ENCODE measurements at regions of chr3 and their contacts with region 1.

Region 1: GRCh38 chr3:113745273-113746068 is 578 bp downstream of the NAA50 start:
- DNase-seq: peak; percentile 51 to 95 (median 78)
- ATAC-seq: peak; percentile 71
- H3K4me3 ChIP-seq: peak overlapping the region; percentile 83 to 86
- H3K4me3 Mint-ChIP-seq: peak overlapping the region; percentile 95
- H3K27ac ChIP-seq: peak overlapping the region; percentile 97 to 99
- H3K27ac Mint-ChIP-seq: peak overlapping the region; percentile 100
- H3K4me1 ChIP-seq: peaks cover 46% of the 10 kb centered on the region
- H3K4me1 Mint-ChIP-seq: peaks cover 72% of the 10 kb centered on the region
- H3K27me3 ChIP-seq: no peaks in the 10 kb centered on the region
- H3K27me3 Mint-ChIP-seq: no peaks in the 10 kb centered on the region
- CTCF ChIP-seq: peak; percentile 66

Region 2: DNA sequence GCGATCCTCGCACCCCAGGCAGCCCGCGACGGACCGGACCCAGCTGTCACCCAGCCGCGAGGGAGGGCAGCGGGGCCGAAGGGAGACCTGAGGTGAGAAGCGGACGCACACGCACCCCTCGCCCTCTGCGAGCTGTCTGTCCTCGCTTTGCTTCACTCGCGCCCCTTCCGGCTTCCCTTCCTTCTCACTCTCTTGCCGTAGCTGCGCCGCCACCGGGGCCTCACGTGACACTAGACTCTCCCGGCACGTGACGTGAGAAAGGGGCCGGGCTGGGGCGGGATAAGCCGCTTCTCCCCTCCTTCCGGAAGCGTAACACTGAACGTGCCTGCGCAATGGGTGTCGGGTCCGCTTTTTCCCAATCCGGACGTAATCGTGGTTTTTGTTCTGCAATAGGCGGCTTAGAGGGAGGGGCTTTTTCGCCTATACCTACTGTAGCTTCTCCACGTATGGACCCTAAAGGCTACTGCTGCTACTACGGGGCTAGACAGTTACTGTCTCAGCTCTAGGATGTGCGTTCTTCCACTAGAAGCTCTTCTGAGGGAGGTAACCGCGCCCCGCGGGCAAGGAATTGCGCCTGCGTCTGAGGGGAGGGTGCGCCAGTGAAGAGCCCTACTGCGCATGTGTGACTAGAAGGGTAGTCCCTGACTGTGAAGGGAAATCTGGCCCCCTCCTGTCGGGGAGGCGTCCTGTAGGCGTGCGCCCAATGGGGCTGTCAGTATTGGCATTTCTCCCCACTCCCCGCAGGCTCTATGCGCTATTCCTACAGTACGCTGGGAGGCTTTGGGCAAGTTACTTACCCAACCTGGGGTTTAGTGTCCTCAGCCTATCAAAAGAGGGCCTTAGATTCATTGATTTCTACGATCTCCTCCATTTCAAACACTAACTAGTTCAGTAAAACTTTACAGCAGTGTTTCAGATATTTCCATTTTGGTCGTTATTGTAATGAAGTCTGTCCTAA is 1183.5 kb before region 1 on chr3 and contains the starts of genes ATG3 and SLC35A5:
- CTCF ChIA-PET with region 1: interaction called, 3 read pairs
- POLR2A ChIA-PET with region 1: no interaction called
- intact Hi-C with region 1: loop called in 1 of 2 experiments (anchors 5 kb)
- DNase-seq: peak; percentile 98 to 100 (median 99)
- ATAC-seq: peak; percentile 77
- H3K4me3 ChIP-seq: peak within 1 kb of the TSS; percentile 75 to 82
- H3K4me3 Mint-ChIP-seq: peak within 1 kb of the TSS; percentile 97
- H3K27ac ChIP-seq: peak within 1 kb of the TSS; percentile 83 to 93
- H3K27ac Mint-ChIP-seq: peak within 1 kb of the TSS; percentile 99
- H3K4me1 ChIP-seq: peaks cover 22% of the 10 kb centered on the region
- H3K4me1 Mint-ChIP-seq: peaks cover 47% of the 10 kb centered on the region
- H3K27me3 ChIP-seq: no peaks in the 10 kb centered on the region
- H3K27me3 Mint-ChIP-seq: no peaks in the 10 kb centered on the region
- CTCF ChIP-seq: no peak
- total RNA-seq, gene ATG3: 50.0 to 54.4 TPM
- total RNA-seq, gene SLC35A5: 4.4 to 6.1 TPM

Region 3: GRCh38 chr3:113287803-113288648 is 457.4 kb before region 1 on chr3:
- CTCF ChIA-PET with region 1: interaction called, 4 read pairs
- POLR2A ChIA-PET with region 1: no interaction called
- intact Hi-C with region 1: loop called in 1 of 2 experiments (anchors 5 kb)
- DNase-seq: peak in 7 of 9 experiments; percentile 14 to 68 (median 56)
- ATAC-seq: peak; percentile 59
- H3K4me3 ChIP-seq: no peak overlapping the region
- H3K4me3 Mint-ChIP-seq: no peak overlapping the region
- H3K27ac ChIP-seq: no peak overlapping the region
- H3K27ac Mint-ChIP-seq: no peak overlapping the region
- H3K4me1 ChIP-seq: no peaks in the 10 kb centered on the region
- H3K4me1 Mint-ChIP-seq: no peaks in the 10 kb centered on the region
- H3K27me3 ChIP-seq: no peaks in the 10 kb centered on the region
- H3K27me3 Mint-ChIP-seq: no peaks in the 10 kb centered on the region
- CTCF ChIP-seq: peak; percentile 99

Region 4: GRCh38 chr3:113531826-113532697 is 213.4 kb before region 1 on chr3 and contains the start of gene SIDT1:
- CTCF ChIA-PET with region 1: no interaction called
- POLR2A ChIA-PET with region 1: interaction called, 6 read pairs
- intact Hi-C with region 1: loop called (anchors 1 to 5 kb)
- DNase-seq: peak; percentile 50 to 90 (median 73)
- ATAC-seq: peak; percentile 77
- H3K4me3 ChIP-seq: peak within 1 kb of the TSS; percentile 83 to 93
- H3K4me3 Mint-ChIP-seq: peak within 1 kb of the TSS; percentile 96
- H3K27ac ChIP-seq: peak within 1 kb of the TSS; percentile 87 to 93
- H3K27ac Mint-ChIP-seq: peak within 1 kb of the TSS; percentile 97
- H3K4me1 ChIP-seq: peaks cover 43% of the 10 kb centered on the region
- H3K4me1 Mint-ChIP-seq: peaks cover 52% of the 10 kb centered on the region
- H3K27me3 ChIP-seq: no peaks in the 10 kb centered on the region
- H3K27me3 Mint-ChIP-seq: no peaks in the 10 kb centered on the region
- CTCF ChIP-seq: no peak
- total RNA-seq, gene SIDT1: 32.1 to 38.3 TPM

Region 5: GRCh38 chr3:113783463-113783862 is 38.0 kb after region 1 on chr3:
- CTCF ChIA-PET with region 1: interaction called, 3 read pairs
- POLR2A ChIA-PET with region 1: no interaction called
- intact Hi-C with region 1: loop called in 1 of 2 experiments (anchors 5 kb)
- DNase-seq: peak in 1 of 9 experiments; percentile 17
- ATAC-seq: no peak
- H3K4me3 ChIP-seq: no peak overlapping the region
- H3K4me3 Mint-ChIP-seq: no peak overlapping the region
- H3K27ac ChIP-seq: no peak overlapping the region
- H3K27ac Mint-ChIP-seq: no peak overlapping the region
- H3K4me1 ChIP-seq: no peaks in the 10 kb centered on the region
- H3K4me1 Mint-ChIP-seq: peaks cover 3% of the 10 kb centered on the region
- H3K27me3 ChIP-seq: no peaks in the 10 kb centered on the region
- H3K27me3 Mint-ChIP-seq: no peaks in the 10 kb centered on the region
- CTCF ChIP-seq: no peak

Region 6: GRCh38 chr3:114152519-114153151 is 407.2 kb after region 1 on chr3:
- CTCF ChIA-PET with region 1: no interaction called
- POLR2A ChIA-PET with region 1: no interaction called
- intact Hi-C with region 1: loop called in 1 of 2 experiments (anchors 5 kb)
- DNase-seq: peak; percentile 76 to 91 (median 87)
- ATAC-seq: peak; percentile 100
- H3K4me3 ChIP-seq: peak overlapping the region; percentile 46 to 50
- H3K4me3 Mint-ChIP-seq: peak overlapping the region; percentile 73
- H3K27ac ChIP-seq: peak overlapping the region in 1 of 2 experiments; percentile 47
- H3K27ac Mint-ChIP-seq: no peak overlapping the region
- H3K4me1 ChIP-seq: peaks cover 8% of the 10 kb centered on the region
- H3K4me1 Mint-ChIP-seq: peaks cover 10% of the 10 kb centered on the region
- H3K27me3 ChIP-seq: no peaks in the 10 kb centered on the region
- H3K27me3 Mint-ChIP-seq: no peaks in the 10 kb centered on the region
- CTCF ChIP-seq: peak; percentile 99

Region 7: DNA sequence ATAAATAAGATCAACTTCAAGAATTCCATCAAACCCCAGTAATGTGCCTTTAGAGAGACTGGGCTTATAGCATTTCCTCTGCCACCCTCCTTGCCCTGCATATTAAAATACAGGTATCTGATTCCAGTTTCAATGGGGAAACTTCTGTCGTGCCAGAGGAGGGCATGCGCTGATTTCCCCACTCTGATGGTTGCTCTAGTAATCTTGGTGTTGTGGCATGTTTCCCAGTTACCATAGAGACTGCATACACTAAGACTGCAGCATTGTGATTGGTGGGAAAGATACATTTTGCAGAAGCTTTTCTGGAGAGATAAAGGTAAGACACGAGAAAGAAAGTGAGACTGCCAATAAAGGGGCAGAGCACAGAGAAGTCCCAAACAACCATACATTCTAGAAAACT is 773.9 kb after region 1 on chr3:
- CTCF ChIA-PET with region 1: no interaction called
- POLR2A ChIA-PET with region 1: no interaction called
- intact Hi-C with region 1: no loop called
- DNase-seq: peak in 2 of 9 experiments; percentile 22 to 41
- ATAC-seq: no peak
- H3K4me3 ChIP-seq: no peak overlapping the region
- H3K4me3 Mint-ChIP-seq: no peak overlapping the region
- H3K27ac ChIP-seq: no peak overlapping the region
- H3K27ac Mint-ChIP-seq: no peak overlapping the region
- H3K4me1 ChIP-seq: no peaks in the 10 kb centered on the region
- H3K4me1 Mint-ChIP-seq: no peaks in the 10 kb centered on the region
- H3K27me3 ChIP-seq: no peaks in the 10 kb centered on the region
- H3K27me3 Mint-ChIP-seq: no peaks in the 10 kb centered on the region
- CTCF ChIP-seq: no peak

Region 8: DNA sequence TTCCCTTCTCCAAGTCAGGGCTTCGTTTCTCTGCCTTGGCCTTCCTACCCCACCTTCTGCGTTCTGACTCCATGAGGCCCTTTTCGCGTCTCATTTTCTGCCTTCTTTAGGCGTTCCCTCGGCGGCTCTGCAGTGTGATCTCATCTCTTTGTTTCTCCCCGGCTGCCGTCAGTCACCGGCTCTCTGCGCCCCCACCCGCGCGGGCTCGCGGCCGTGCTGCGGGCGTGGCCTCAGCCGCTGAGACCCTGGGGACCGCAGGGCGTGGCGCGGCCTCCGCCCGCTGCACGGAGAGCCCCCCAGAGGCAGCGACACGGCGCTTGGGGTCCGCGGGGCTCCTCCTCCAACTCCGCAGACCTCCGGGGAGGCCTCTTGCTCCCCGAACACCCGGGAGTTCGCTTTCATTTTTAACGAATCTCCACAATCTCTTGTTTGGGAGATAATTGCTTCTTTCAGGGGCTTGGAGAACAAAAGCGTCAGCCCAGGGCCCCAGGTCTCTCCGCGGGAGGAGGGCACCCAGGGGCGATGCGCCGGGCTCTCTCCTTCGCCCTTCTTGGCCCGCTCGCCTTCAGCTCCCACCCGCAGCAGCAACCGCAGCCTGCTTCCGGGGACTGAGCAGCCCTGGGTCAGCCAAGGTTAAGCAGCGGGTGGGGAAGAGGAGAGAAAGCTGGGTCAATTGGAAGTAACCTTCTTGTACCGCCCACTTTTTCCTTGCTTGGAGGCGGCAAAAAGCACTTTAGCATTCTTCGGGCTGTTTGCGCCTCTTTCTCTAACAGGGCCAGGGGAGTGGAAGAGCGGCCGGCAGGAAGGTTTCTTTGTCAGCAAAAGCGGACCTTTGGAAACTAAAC is 1913.1 kb after region 1 on chr3:
- CTCF ChIA-PET with region 1: no interaction called
- POLR2A ChIA-PET with region 1: no interaction called
- intact Hi-C with region 1: loop called in 1 of 2 experiments (anchors 5 kb)
- DNase-seq: peak; percentile 46 to 85 (median 78)
- ATAC-seq: peak; percentile 92
- H3K4me3 ChIP-seq: peak overlapping the region; percentile 83 to 84
- H3K4me3 Mint-ChIP-seq: peak overlapping the region; percentile 91
- H3K27ac ChIP-seq: peak overlapping the region; percentile 63 to 90
- H3K27ac Mint-ChIP-seq: peak overlapping the region; percentile 98
- H3K4me1 ChIP-seq: peaks cover 17% of the 10 kb centered on the region
- H3K4me1 Mint-ChIP-seq: peaks cover 25% of the 10 kb centered on the region
- H3K27me3 ChIP-seq: no peaks in the 10 kb centered on the region
- H3K27me3 Mint-ChIP-seq: no peaks in the 10 kb centered on the region
- CTCF ChIP-seq: no peak

Measured in CD8-positive, alpha-beta T cell (primary cell).